Posterior cingulate gyrus (tissue), 11 donors: ENCODE measurements at regions of chr20 and their contacts with region 1.

Region 1: GRCh38 chr20:57351042-57351783 is at the start of gene RAE1:
- DNase-seq: peak; percentile 89 to 99 (median 94)

Region 2: DNA sequence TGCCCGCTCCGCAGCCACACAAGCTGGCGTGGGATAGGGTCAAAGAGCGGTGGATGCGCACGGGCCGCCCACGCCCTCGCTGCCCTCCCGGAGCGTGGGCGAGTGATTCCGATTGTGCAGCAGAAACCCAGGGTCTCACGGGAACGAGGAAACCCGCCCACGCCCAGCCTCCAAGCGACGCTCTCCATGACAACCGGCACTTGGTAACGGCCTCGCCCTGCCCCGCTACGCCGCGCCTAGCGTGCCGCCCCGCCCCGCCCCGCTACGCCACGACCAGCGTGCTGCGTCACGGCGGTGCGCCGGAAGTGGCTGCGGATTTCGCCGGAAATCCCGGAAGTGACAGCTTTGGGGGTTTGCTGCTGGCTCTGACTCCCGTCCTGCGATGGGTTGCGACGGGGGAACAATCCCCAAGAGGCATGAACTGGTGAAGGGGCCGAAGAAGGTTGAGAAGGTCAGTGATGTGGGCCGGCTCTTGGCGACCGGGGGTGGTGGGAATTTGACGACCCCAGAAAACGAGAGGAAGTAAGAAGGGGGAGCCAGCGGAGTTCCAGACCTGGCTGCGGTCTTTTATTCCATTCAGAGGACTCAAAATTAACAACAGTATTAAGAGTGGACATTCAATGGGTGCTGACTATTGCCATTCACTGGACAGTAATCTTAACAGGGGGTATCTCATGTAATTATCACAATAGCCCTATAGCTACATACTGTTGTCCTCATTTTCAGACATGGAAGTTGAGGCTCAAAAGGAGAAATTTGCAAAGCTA is 882.7 kb before region 1 on chr20 and contains the start of gene RTF2:
- intact Hi-C with region 1: loop called (anchors 5 kb)
- DNase-seq: peak; percentile 89 to 99 (median 94)

Region 3: DNA sequence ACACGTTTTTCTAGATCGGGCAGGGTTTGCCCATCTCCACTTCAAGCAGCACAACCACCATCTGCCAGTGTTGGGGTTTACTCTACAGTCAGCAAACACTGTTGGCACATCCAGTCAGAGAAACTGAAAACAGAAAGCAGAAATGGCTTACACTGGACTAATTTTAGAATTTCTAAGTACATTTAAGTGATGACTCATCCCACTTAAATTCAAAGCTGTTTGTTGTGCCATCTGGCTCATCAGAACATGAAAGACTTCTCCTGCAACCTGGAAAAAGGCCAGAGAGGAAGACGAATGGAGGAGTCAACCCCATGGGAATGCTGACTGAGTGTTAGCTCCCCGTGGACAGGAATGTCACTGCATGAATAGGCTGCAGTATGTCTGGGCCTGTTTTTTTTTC is 796.3 kb before region 1 on chr20:
- intact Hi-C with region 1: loop called (anchors 10 kb)
- DNase-seq: peak in 5 of 10 donors; percentile 17 to 72 (median 25)

Region 4: DNA sequence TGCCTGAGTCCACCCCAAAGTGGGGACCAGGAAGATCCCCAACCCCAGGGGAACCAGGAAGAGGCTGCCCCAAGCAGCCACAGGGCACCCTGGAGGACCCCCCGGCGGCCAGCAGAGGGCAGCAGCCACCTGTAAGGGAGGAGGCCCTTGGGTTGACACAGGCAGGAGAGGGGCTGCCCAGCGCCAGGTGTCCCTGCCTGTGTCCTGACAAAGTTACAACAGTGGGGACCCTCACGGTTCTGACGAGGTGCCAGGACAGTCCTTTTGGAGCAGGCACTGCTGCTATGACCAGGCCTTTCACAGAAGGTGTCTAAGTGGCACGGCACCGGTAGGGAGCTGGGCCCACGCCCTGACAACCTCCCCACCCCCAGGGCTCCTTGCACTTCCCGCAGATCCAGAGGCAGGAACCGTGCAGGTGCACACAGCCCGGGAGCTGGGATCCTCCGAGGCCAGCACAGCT is 261.5 kb before region 1 on chr20:
- intact Hi-C with region 1: loop called (anchors 1 kb)
- DNase-seq: peak; percentile 55 to 96 (median 84)

Region 5: GRCh38 chr20:57383447-57384347 is 32.5 kb after region 1 on chr20:
- intact Hi-C with region 1: no loop called
- DNase-seq: peak in 2 of 10 donors; percentile 48 to 57

Region 6: DNA sequence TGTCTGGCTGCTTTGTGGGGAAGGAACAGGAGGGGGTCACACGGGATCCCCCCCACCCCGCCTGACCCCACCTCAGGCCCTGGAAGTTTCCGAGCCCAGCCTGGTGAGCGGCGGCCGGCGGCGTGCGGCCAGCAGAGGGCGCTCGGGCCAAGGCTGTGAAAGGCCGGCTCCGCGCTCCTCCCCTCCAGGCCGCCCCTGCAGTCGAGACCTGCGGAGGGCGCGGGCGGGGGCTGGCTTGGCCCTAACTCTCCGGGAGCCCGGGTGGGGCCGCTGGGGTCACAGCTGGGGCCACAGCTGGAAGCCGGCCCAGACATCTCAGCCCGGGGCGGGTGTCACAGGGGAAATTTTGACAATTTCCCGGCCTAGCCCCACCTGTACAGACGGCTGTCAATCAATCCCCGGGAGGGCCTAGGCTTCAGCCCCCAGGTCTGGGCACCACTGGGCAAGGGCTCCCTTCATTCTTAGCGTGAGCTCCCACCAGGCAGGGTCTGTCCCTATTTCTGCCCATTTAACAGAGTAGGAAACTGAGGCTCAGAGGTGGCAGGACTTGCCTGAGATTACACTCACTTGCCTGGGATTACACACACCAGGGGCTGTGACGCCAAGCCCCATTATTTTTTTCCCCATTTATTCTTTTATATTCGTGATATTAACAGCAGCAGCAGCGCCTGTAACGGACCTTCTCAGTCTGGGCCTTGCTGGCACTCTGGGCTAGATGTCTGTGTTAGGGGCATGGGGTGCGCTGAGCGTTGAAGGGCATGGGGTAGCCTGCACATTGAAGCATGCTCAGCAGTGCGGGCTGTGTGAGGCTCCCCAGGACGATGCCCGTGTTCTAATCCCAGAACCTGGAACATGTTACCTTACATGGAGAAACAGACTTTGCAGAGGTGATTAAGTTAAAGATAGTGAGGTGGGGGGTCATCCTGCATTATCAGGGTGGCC is 246.1 kb after region 1 on chr20:
- intact Hi-C with region 1: no loop called
- DNase-seq: peak; percentile 27 to 95 (median 68)

Region 7: GRCh38 chr20:57654363-57654997 is 303.3 kb after region 1 on chr20:
- intact Hi-C with region 1: no loop called
- DNase-seq: peak in 7 of 10 donors; percentile 56 to 91 (median 64)